ENCODE measurements at regions of chr1 and their contacts with region 1.

Region 1: GRCh38 chr1:25895365-25895993 is 10.7 kb downstream of the STMN1 start:
- DNase-seq: peak; percentile 80 to 96 (median 89)
- ATAC-seq: peak; percentile 99 to 100 (median 100)
- H3K4me3 ChIP-seq: no peak overlapping the region
- H3K4me3 Mint-ChIP-seq: no peak overlapping the region
- H3K27ac ChIP-seq: no peak overlapping the region
- H3K27ac Mint-ChIP-seq: peak overlapping the region; percentile 55 to 57
- H3K4me1 ChIP-seq: peaks cover 0 to 9% of the 10 kb centered on the region in 2 experiments
- H3K4me1 Mint-ChIP-seq: peaks cover 8 to 10% (median 9%) of the 10 kb centered on the region in 3 donors
- H3K27me3 ChIP-seq: no peaks in the 10 kb centered on the region
- H3K27me3 Mint-ChIP-seq: no peaks in the 10 kb centered on the region

Region 2: DNA sequence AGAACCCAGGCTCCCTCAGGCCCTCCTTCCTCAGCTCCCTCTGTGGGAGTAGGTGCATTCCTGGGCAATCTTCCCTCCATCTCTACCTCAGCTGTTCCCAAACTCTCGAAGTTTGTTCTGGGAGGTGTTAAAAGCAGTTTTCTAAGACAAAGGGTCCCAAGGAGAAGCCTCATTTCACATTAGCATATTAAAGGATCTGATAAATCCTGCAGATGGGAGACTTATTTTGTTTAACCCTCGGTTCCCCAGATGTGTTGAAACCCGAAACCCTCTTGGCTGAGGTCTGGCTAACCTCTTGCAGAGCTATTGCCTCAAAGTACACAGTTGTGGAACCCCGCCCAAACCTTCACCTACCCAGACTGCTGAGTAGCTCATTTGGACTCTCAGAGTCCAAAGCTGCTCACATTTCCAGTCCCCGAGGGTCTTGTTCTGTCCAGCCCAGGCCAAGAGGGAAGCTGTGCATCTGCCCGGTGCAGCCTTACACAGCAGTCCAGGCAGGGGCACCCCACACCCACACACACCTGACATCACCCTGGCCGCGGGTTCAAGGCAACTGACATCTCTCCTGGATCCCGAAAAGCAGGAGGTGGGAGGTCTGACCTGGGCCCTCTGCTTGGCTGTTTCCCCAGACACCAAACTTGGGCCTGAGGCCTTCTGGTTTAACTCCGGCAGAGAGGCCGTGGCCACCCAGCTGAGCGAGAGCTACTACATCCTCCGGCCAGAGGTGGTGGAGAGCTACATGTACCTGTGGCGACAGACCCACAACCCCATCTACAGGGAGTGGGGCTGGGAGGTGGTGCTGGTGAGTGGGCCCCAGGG is 115.0 kb before region 1 on chr1:
- CTCF ChIA-PET with region 1: no interaction called
- POLR2A ChIA-PET with region 1: no interaction called
- DNase-seq: no peak
- ATAC-seq: no peak
- H3K4me3 ChIP-seq: no peak overlapping the region
- H3K4me3 Mint-ChIP-seq: no peak overlapping the region
- H3K27ac ChIP-seq: no peak overlapping the region
- H3K27ac Mint-ChIP-seq: peak overlapping the region; percentile 27 to 48
- H3K4me1 ChIP-seq: peaks cover 11 to 32% of the 10 kb centered on the region in 2 experiments
- H3K4me1 Mint-ChIP-seq: peaks cover 16 to 55% (median 20%) of the 10 kb centered on the region in 3 donors
- H3K27me3 ChIP-seq: no peaks in the 10 kb centered on the region
- H3K27me3 Mint-ChIP-seq: no peaks in the 10 kb centered on the region

Region 3: GRCh38 chr1:25990702-25991395 is 95.4 kb after region 1 on chr1:
- CTCF ChIA-PET with region 1: interaction called, 5 to 311 read pairs
- POLR2A ChIA-PET with region 1: no interaction called
- DNase-seq: peak; percentile 20 to 69 (median 48)
- ATAC-seq: peak; percentile 93 to 99 (median 96)
- H3K4me3 ChIP-seq: peak overlapping the region; percentile 58 to 88
- H3K4me3 Mint-ChIP-seq: peak overlapping the region; percentile 79 to 89 (median 88)
- H3K27ac ChIP-seq: peak overlapping the region; percentile 69
- H3K27ac Mint-ChIP-seq: peak overlapping the region; percentile 92 to 95
- H3K4me1 ChIP-seq: peaks cover 30 to 73% of the 10 kb centered on the region in 2 experiments
- H3K4me1 Mint-ChIP-seq: peaks cover 71 to 74% (median 71%) of the 10 kb centered on the region in 3 donors
- H3K27me3 ChIP-seq: no peaks in the 10 kb centered on the region
- H3K27me3 Mint-ChIP-seq: no peaks in the 10 kb centered on the region

Region 4: GRCh38 chr1:25997828-25998761 is 102.6 kb after region 1 on chr1 and contains the start of gene PAFAH2:
- CTCF ChIA-PET with region 1: interaction called, 36 to 311 read pairs
- POLR2A ChIA-PET with region 1: interaction called, 3 to 13 read pairs
- DNase-seq: peak; percentile 90 to 99 (median 96)
- ATAC-seq: peak; percentile 96 to 98 (median 97)
- H3K4me3 ChIP-seq: peak within 1 kb of the TSS; percentile 63 to 66
- H3K4me3 Mint-ChIP-seq: peak within 1 kb of the TSS; percentile 91 to 97 (median 94)
- H3K27ac ChIP-seq: peak within 1 kb of the TSS; percentile 83
- H3K27ac Mint-ChIP-seq: peak within 1 kb of the TSS; percentile 99
- H3K4me1 ChIP-seq: peaks cover 10 to 31% of the 10 kb centered on the region in 2 experiments
- H3K4me1 Mint-ChIP-seq: peaks cover 35 to 39% (median 37%) of the 10 kb centered on the region in 3 donors
- H3K27me3 ChIP-seq: no peaks in the 10 kb centered on the region
- H3K27me3 Mint-ChIP-seq: no peaks in the 10 kb centered on the region
- total RNA-seq, gene PAFAH2: 10.2 to 30.2 (median 17.3) TPM

Region 5: GRCh38 chr1:26035959-26036755 is 140.7 kb after region 1 on chr1:
- CTCF ChIA-PET with region 1: interaction called in 1 of 2 experiments, 6 read pairs
- POLR2A ChIA-PET with region 1: interaction called in 1 of 2 experiments, 10 read pairs
- DNase-seq: peak; percentile 28 to 88 (median 63)
- ATAC-seq: peak; percentile 67 to 78 (median 72)
- H3K4me3 ChIP-seq: peak overlapping the region; percentile 85 to 94
- H3K4me3 Mint-ChIP-seq: peak overlapping the region; percentile 96 to 99 (median 97)
- H3K27ac ChIP-seq: no peak overlapping the region
- H3K27ac Mint-ChIP-seq: peak overlapping the region; percentile 86 to 94
- H3K4me1 ChIP-seq: peaks cover 0 to 17% of the 10 kb centered on the region in 2 experiments
- H3K4me1 Mint-ChIP-seq: peaks cover 10 to 16% (median 10%) of the 10 kb centered on the region in 3 donors
- H3K27me3 ChIP-seq: peaks cover 0 to 60% of the 10 kb centered on the region in 2 experiments
- H3K27me3 Mint-ChIP-seq: no peaks in the 10 kb centered on the region